ENCODE measurements at regions of chr16 and their contacts with region 1.

Region 1: GRCh38 chr16:14534546-14534945 is 95.5 kb downstream of the PARN start:
- DNase-seq: no peak
- H3K4me3 ChIP-seq: no peak overlapping the region
- H3K27ac ChIP-seq: no peak overlapping the region
- H3K4me1 ChIP-seq: no peaks in the 10 kb centered on the region
- H3K27me3 ChIP-seq: no peaks in the 10 kb centered on the region
- CTCF ChIP-seq: no peak
- POLR2A ChIP-seq: no peak

Region 2: GRCh38 chr16:14249291-14250032 is 285.1 kb before region 1 on chr16:
- intact Hi-C with region 1: loop called (anchors 5 kb)
- DNase-seq: peak; percentile 48 to 49
- H3K4me3 ChIP-seq: no peak overlapping the region
- H3K27ac ChIP-seq: no peak overlapping the region
- H3K4me1 ChIP-seq: no peaks in the 10 kb centered on the region
- H3K27me3 ChIP-seq: no peaks in the 10 kb centered on the region
- CTCF ChIP-seq: peak; percentile 63 to 88 (median 72)
- POLR2A ChIP-seq: no peak